GM12878 (cell line): ENCODE measurements at regions of chr5 and their contacts with region 1.

Region 1: GRCh38 chr5:111752426-111752965 is 4.5 kb downstream of the NREP start:
- DNase-seq: no peak
- ATAC-seq: no peak
- H3K4me3 ChIP-seq: no peak overlapping the region
- H3K27ac ChIP-seq: no peak overlapping the region
- H3K4me1 ChIP-seq: peaks cover 9% of the 10 kb centered on the region; the same call in 1 of the 2 replicates
- H3K27me3 ChIP-seq: no peaks in the 10 kb centered on the region
- CTCF ChIP-seq: no peak
- EP300 ChIP-seq: no peak
- POLR2A ChIP-seq: no peak
- RAD21 ChIP-seq: no peak

Region 2: GRCh38 chr5:111742177-111742994 is 10.1 kb before region 1 on chr5:
- CTCF ChIA-PET with region 1: interaction called, 8 read pairs
- POLR2A ChIA-PET with region 1: interaction called, 4 read pairs
- RAD21 ChIA-PET with region 1: interaction called, 6 read pairs
- SMC1A ChIA-PET with region 1: interaction called, 19 read pairs
- in situ Hi-C with region 1: no loop called
- intact Hi-C with region 1: no loop called
- DNase-seq: no peak
- ATAC-seq: peak; percentile 37
- H3K4me3 ChIP-seq: 0 out of 2 replicates have a peak overlapping the region, but pooled peaks have one; percentile 6
- H3K27ac ChIP-seq: no peak overlapping the region
- H3K4me1 ChIP-seq: peaks cover 9% of the 10 kb centered on the region
- H3K27me3 ChIP-seq: no peaks in the 10 kb centered on the region
- CTCF ChIP-seq: no peak
- EP300 ChIP-seq: no peak
- POLR2A ChIP-seq: no peak
- RAD21 ChIP-seq: no peak

Region 3: GRCh38 chr5:112551419-112552032 is 799.0 kb after region 1 on chr5:
- CTCF ChIA-PET with region 1: no interaction called
- POLR2A ChIA-PET with region 1: no interaction called
- RAD21 ChIA-PET with region 1: no interaction called
- SMC1A ChIA-PET with region 1: no interaction called
- in situ Hi-C with region 1: no loop called
- intact Hi-C with region 1: no loop called
- DNase-seq: no peak
- ATAC-seq: peak; percentile 83
- H3K4me3 ChIP-seq: no peak overlapping the region
- H3K27ac ChIP-seq: no peak overlapping the region
- H3K4me1 ChIP-seq: no peaks in the 10 kb centered on the region
- H3K27me3 ChIP-seq: no peaks in the 10 kb centered on the region; a peak in 1 of 4 replicates
- CTCF ChIP-seq: peak; percentile 57 to 79 (median 66)
- EP300 ChIP-seq: no peak
- POLR2A ChIP-seq: no peak
- RAD21 ChIP-seq: peak; percentile 85